Psoas muscle (tissue), 8 donors: ENCODE measurements at regions of chr5 and their contacts with region 1.

Region 1: DNA sequence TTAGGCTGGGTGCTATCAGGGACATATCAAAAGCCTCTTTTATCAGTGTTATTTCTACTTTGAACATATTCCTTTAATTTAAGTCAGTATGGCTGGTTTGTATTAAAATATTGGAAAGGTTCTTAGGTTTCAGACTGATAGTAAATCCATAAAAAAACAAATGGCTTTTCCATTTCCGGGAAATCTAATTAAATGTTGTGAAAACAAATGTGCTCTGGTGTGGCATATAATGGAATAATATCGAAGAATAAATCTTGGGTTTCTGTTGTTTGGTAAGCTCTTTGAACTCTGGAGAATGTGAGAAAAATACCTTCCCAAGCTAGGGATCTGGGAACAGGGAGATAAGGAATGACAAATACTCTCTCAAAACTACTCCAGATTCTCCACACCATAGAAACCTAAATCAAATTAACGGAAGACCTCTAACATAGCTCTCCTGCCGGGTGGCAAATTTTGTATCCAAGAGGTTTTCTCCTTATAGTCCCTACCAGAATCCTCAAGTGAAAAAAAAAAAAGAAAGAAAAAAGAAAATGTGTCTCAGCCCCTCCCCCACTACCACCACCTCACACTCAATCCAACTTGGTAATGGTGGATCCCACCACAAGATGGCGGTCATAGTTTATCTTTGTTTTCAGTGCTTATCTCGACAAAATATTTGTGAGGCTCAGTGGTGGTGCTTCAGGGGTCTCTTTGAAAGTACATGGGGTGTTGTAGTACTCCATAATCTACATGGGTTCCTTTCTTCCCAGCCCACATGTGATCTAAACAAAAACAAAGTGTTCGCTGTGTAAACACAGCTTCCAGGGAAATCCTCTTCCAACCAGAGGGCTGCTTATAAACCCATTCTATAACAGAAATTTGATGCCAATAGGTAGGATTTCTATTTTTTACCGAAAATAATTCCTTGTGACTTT is 54.6 kb upstream of the FST start:
- DNase-seq: no peak
- ATAC-seq: peak in 1 of 4 donors; percentile 38
- H3K4me3 ChIP-seq: no peak overlapping the region
- H3K27ac ChIP-seq: no peak overlapping the region
- H3K4me1 ChIP-seq: no peaks in the 10 kb centered on the region
- H3K27me3 ChIP-seq: no peaks in the 10 kb centered on the region
- CTCF ChIP-seq: peak; percentile 37

Region 2: GRCh38 chr5:53123702-53124101 is 302.2 kb before region 1 on chr5:
- intact Hi-C with region 1: loop called in 1 of 2 experiments (anchors 10 kb)
- DNase-seq: no peak
- ATAC-seq: no peak
- H3K4me3 ChIP-seq: no peak overlapping the region
- H3K27ac ChIP-seq: no peak overlapping the region
- H3K4me1 ChIP-seq: no peaks in the 10 kb centered on the region
- H3K27me3 ChIP-seq: no peaks in the 10 kb centered on the region
- CTCF ChIP-seq: no peak

Region 3: DNA sequence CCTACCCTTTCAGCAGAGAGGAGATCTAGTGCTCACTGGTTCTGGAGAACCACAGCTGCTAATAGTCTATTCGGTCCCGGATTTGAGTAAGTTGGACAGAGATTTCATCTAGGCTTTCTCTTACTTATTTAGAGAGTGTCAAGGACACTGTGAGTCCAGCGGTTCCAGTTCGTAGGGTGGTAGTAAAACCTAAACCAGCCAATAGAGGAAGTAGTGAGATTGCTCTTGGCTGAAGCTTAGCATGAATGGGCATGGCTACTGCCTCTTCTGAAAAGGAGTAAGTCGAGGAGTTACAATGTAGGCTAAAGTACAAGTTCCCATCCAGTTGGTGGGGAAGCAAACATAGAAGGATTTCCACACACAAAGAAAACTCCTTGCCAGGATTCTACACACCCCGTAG is 206.7 kb before region 1 on chr5:
- intact Hi-C with region 1: no loop called
- DNase-seq: no peak
- ATAC-seq: no peak
- H3K4me3 ChIP-seq: no peak overlapping the region
- H3K27ac ChIP-seq: no peak overlapping the region
- H3K4me1 ChIP-seq: no peaks in the 10 kb centered on the region
- H3K27me3 ChIP-seq: no peaks in the 10 kb centered on the region
- CTCF ChIP-seq: no peak

Region 4: DNA sequence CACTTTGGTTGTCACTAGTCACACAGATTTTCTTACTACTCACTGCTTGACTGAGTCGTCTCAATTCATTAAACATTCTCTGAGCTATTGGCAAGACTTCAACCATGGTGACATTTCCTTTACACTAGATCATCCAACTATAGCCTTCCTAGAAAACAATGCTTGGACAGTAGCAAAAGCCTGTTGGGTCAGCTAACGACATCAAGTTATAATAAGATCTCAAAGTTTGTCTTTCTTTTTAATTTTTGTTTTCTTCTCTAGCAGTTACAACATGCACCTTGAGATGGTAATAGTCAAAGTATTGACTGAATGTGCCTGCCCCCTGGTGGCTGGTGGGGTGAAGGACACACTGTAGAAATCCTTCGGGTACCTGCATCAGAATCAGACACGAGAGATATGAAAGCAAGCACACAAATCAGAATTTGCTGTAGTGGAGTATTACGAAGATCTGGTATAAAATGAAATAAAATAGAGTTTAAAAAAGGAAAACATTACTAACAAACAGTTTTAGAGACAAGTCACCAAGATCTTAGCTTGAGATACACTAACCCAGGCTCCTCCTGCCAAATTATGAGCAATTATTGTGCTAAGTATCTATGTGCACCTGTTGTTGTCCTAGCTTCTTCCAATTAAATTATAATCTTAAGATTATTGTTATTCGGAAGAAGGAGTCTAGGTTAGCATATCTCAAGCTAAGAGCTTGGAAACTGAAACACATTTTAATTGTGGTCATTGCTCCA is 803.4 kb after region 1 on chr5:
- intact Hi-C with region 1: loop called in 1 of 2 experiments (anchors 10 kb)
- DNase-seq: peak; percentile 65 to 79
- ATAC-seq: peak; percentile 49 to 83 (median 74)
- H3K4me3 ChIP-seq: no peak overlapping the region
- H3K27ac ChIP-seq: no peak overlapping the region
- H3K4me1 ChIP-seq: peaks cover 4% of the 10 kb centered on the region
- H3K27me3 ChIP-seq: no peaks in the 10 kb centered on the region
- CTCF ChIP-seq: peak; percentile 85